Heart right ventricle (tissue), 16 donors: ENCODE measurements at regions of chr3 and their contacts with region 1.

Region 1: GRCh38 chr3:42443819-42444436 is 33.5 kb upstream of the LYZL4 start:
- DNase-seq: peak; percentile 75 to 87
- ATAC-seq: peak; percentile 92 to 98 (median 95)
- H3K4me3 ChIP-seq: no peak overlapping the region
- H3K27ac ChIP-seq: no peak overlapping the region
- H3K4me1 ChIP-seq: no peaks in the 10 kb centered on the region
- H3K27me3 ChIP-seq: peaks cover 0 to 7% (median 0%) of the 10 kb centered on the region in 7 donors
- CTCF ChIP-seq: peak; percentile 91 to 99 (median 97)

Region 2: DNA sequence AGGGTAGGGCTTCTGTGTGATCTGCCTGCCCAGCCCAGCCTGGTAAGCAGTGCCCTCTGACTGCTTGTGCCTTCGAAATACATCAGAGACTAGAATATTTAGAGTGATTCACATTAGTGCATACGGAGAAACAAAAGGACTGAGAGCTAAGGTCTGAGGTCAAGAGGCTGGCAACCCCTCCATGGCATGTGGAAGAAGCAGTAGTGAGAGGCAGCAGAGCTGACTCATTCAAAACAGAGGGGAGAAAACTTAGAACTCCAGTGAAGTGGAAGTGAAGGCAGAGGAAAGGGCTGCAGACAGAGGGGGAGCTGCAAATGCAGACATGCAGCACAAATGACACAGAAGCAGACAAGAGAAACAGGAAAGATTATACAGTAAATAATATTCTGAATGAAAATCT is 543.7 kb before region 1 on chr3:
- intact Hi-C with region 1: loop called in 6 of 10 experiments (anchors 5 to 10 kb)
- DNase-seq: no peak
- ATAC-seq: no peak
- H3K4me3 ChIP-seq: no peak overlapping the region
- H3K27ac ChIP-seq: peak overlapping the region in 1 of 10 donors; percentile 3
- H3K4me1 ChIP-seq: peaks cover 0 to 22% (median 0%) of the 10 kb centered on the region in 9 donors
- H3K27me3 ChIP-seq: no peaks in the 10 kb centered on the region
- CTCF ChIP-seq: no peak

Region 3: DNA sequence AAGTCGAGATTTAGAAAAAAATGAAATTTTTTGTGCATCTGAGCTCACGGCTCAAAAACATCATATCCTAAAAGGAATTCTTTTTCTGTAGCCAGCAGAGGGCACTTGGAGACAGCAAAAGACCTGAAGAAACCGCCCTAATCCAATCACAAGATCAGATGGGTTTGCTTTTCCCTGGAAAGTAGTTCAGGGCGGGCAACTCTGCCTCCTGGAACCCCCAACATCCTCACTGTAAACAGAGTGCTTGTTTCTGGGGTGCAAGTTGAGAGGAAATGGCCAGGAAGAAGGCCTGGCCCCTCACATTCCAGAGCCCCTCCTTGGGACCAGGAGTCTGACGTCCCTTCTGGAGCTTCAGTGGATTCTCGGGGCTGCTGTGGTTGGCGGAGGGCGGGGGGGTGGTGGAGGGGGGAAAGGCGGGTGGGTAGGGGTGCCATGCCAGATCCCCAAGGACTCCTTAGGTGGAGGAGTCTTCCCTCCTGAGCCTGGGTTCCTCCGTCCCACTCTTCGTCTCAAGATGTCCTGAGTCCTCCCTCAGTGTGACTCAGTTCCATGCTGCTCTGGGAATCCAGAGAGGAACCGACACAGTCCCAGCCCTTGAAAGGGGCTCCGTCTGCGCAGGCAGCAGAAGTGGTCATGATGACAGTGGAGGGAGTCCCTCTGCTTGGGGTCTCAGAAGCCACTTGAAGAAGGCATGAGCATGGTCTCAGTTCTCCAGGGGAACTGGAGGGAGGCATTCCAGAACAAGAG is 213.8 kb before region 1 on chr3:
- intact Hi-C with region 1: loop called in 8 of 10 experiments (anchors 5 kb)
- DNase-seq: no peak
- ATAC-seq: peak in 2 of 8 donors; percentile 49 to 53
- H3K4me3 ChIP-seq: no peak overlapping the region
- H3K27ac ChIP-seq: no peak overlapping the region
- H3K4me1 ChIP-seq: peaks cover 0 to 11% (median 7%) of the 10 kb centered on the region in 9 donors
- H3K27me3 ChIP-seq: peaks cover 0 to 8% (median 0%) of the 10 kb centered on the region in 7 donors
- CTCF ChIP-seq: peak in 8 of 9 donors; percentile 30 to 66 (median 59)

Region 4: GRCh38 chr3:42256135-42256819 is 187.7 kb before region 1 on chr3:
- intact Hi-C with region 1: loop called in 1 of 10 experiments (anchors 5 kb)
- DNase-seq: no peak
- ATAC-seq: no peak
- H3K4me3 ChIP-seq: no peak overlapping the region
- H3K27ac ChIP-seq: no peak overlapping the region
- H3K4me1 ChIP-seq: no peaks in the 10 kb centered on the region
- H3K27me3 ChIP-seq: peaks cover 0 to 58% (median 35%) of the 10 kb centered on the region in 7 donors
- CTCF ChIP-seq: no peak

Region 5: DNA sequence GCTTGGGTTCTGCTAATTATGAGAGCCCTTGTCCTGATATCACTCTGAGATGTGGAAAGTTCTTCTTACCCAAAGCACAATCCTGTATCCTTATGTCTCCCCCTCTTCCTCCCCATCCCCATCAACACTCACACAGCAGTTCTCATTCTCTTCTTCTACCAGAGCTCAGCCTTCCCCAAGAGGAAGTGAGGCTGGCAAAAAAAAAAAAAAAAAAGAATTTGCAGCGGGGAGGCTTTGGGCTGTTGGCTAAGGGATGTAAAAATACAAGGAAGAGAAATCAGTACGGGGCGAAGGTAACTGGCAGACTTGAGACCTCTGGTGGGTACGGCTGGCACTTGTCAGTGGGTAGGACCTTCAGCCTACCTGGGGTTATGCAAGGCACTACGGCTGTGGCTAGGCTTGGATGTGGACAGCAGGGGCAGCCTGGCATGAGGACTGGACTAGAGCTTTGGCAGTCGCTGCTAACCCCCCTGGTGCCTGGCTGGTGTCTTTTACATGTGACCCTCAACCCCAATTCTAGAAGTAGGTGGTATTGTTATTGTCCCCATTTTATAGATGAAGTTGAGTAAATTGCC is 63.9 kb after region 1 on chr3:
- intact Hi-C with region 1: no loop called
- DNase-seq: no peak
- ATAC-seq: no peak
- H3K4me3 ChIP-seq: no peak overlapping the region
- H3K27ac ChIP-seq: no peak overlapping the region
- H3K4me1 ChIP-seq: peaks cover 6 to 30% (median 19%) of the 10 kb centered on the region in 9 donors
- H3K27me3 ChIP-seq: peaks cover 0 to 10% (median 2%) of the 10 kb centered on the region in 7 donors
- CTCF ChIP-seq: no peak